ENCODE measurements at regions of chr3 and their contacts with region 1.

Region 1: DNA sequence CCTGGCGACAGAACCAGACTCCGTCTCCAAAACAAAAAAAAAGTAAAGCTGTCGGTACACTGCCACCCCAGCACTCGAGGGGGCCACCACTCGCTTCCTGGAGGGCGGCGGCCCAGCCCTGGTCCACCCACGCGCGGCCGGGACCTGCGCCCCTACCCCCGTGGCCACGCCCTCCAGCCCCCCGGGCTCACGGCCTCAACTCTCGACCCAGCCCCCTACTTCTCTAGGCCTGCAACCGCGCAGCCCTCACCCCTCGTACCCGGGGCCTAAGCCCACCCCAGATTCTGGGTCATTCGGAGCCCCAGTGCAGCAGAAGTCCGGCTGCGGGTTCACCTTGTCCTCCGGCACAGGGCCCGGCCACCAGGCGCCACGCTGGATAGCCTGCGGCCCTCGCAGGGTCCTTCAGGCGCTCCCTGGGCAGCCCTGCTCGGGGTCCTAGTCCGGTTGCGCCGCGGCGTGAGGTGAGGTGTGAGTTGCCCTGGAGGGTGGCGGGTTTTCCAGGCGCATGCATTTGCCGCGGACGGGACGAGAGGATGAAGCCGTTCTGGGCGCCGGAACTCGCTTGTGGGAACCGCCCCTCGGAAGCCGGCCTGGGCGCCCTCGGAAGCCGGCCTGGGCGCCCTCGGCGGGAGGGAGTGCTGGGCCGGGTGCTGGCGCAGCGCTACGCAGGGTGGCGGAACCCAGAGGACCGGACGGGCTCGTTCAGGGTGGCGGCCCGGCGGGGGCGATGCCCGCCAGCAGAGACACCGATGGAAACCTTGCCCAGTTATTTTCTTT is 32.3 kb downstream of the SPINK8 start:
- DNase-seq: peak; percentile 42
- ATAC-seq: peak; percentile 98
- H3K4me3 ChIP-seq: peak within 1 kb of the TSS; percentile 69 to 82
- H3K27ac ChIP-seq: peak within 1 kb of the TSS; percentile 90
- H3K4me1 ChIP-seq: peaks cover 2% of the 10 kb centered on the region; the same call in 1 of the 2 replicates
- H3K27me3 ChIP-seq: no peaks in the 10 kb centered on the region
- CTCF ChIP-seq: no peak

Region 2: DNA sequence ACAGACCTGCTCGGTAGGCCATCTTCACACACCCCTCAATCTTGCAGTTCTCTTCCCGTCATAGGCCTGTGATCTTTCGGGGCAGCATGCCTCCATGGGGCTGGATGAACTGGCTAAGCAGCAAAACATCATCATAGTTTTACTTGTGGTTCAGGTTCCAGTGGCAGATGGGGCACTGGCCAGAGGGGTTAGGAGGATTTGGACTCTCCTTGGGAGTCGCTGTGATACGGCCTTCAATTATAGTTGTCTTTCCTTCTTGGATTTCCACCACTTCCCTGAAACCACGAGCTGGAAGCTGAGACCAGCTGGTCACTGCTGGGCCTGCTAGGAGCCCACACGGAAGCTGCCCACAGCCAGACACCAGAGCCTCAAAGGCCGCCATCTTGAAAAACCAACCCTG is 44.7 kb before region 1 on chr3:
- CTCF ChIA-PET with region 1: no interaction called
- POLR2A ChIA-PET with region 1: interaction called, 13 read pairs
- in situ Hi-C with region 1: no loop called
- intact Hi-C with region 1: no loop called
- DNase-seq: no peak
- ATAC-seq: no peak
- H3K4me3 ChIP-seq: no peak overlapping the region
- H3K27ac ChIP-seq: no peak overlapping the region
- H3K4me1 ChIP-seq: no peaks in the 10 kb centered on the region
- H3K27me3 ChIP-seq: no peaks in the 10 kb centered on the region
- CTCF ChIP-seq: no peak

Measured in Panc1 (cell line).